ENCODE measurements at regions of chr1 and their contacts with region 1.

Region 1: DNA sequence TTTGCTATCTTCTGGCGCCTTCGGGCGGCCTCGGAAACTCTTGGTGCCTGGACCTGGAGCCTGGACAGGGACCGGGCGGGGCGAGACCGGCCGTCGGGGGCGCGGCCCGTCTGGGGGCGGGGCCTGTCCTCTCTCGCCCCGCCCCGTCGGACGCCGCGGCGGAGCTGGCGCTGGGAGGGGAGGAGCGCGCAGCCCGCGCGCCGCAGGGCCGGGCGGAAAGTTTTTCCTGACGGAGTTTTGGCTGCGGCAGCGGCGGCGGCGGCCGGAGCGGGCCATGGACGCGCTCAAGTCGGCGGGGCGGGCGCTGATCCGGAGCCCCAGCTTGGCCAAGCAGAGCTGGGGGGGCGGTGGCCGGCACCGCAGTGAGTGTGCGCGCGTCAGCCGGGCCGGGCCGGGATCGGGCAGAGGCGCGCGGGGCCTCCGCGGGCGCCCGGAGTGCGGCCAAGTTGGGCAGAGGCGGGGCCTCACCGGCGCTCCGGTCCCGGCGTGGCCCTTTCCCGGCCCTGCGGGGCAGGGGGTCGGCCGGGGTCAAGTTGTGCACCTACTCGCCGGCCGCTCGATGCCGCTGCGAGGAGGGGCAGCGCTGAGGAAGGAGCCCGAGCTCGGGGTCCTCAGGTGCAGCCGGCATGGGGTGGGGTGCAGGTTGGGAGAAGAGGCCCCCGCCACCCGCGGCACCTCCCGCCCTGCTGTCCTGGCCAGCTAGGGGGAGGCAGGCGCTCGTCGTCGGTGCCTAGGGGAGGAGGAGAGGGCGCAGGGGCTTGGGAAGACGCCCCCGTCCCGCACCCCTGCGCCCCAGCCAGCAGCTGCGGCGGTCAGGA is at the start of gene LDLRAP1:
- DNase-seq: peak; percentile 76 to 88 (median 81)
- H3K4me3 ChIP-seq: peak within 1 kb of the TSS; percentile 69
- H3K27ac ChIP-seq: peak within 1 kb of the TSS; percentile 23 to 81
- H3K4me1 ChIP-seq: peaks cover 8% of the 10 kb centered on the region
- H3K27me3 ChIP-seq: no peaks in the 10 kb centered on the region
- CTCF ChIP-seq: no peak
- EP300 ChIP-seq: no peak
- POLR2A ChIP-seq: peak; percentile 80
- total RNA-seq, gene LDLRAP1: 9.3 to 17.4 (median 13.7) TPM

Region 2: DNA sequence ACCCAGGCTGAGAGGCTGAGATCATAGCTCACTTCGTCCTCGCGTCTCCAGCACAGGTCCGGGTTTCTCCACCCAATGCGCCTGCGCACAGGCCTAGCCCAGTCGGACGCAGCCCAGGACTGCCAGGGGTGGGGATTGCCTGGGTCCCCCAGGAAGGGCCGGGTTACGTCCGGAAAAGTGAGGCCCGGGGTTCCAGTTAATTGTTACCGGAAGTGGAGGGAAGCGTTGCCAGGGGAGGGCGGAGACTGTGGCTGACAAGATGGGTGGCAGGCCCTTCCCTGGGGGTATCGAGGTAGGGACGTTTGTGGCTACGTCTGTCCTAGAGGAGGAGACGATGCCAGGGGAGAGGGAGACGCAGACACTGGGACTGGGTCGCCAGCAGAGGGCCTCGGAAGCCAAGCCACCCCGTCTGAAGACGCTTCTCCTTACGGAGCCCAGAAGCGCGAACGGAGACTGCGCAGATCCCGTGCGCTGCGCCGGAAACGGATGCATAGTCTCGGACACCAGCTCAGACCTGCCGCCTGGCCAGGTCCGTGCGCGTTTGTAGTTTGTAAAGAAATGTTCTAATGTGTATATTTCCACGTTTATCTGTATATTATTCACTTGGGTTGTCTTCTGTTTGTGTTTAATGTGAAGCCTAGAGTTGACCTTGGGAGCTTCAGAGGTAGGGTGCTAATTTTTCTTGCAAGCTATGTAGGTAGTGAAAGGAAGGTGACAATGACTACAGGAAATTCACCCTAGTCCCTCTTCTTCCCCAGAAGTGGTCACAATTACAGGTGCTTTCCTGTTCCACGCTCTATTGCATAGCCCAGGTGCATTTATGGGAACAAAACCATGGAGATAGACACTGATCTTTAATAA is 303.7 kb before region 1 on chr1:
- intact Hi-C with region 1: loop called in 1 of 4 experiments (anchors 10 kb)
- DNase-seq: peak; percentile 88 to 92 (median 91)
- H3K4me3 ChIP-seq: peak overlapping the region; percentile 41
- H3K27ac ChIP-seq: peak overlapping the region; percentile 91 to 93
- H3K4me1 ChIP-seq: no peaks in the 10 kb centered on the region
- H3K27me3 ChIP-seq: no peaks in the 10 kb centered on the region
- CTCF ChIP-seq: peak; percentile 49 to 86 (median 79)
- EP300 ChIP-seq: no peak
- POLR2A ChIP-seq: no peak

Region 3: DNA sequence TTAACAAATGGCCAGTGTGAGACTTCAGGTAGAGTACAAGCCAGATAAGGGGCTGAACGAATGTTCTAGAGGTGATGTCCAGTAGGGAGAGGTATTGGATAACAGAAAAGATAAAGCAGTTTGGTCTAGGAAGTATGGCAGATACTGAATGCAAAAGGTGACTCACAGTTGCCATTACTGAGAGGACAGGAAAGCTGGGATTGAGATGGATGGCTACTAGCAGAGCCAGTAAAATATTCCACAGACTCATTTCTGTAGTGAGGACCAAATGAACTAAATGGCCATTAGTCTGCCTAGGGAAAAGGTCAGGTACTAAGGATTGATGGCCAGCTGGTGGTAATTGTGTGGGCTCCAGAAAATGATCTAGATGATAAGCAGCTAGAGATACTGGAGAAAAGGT is 101.5 kb before region 1 on chr1:
- intact Hi-C with region 1: no loop called
- DNase-seq: no peak
- H3K4me3 ChIP-seq: no peak overlapping the region
- H3K27ac ChIP-seq: no peak overlapping the region
- H3K4me1 ChIP-seq: peaks cover 3% of the 10 kb centered on the region
- H3K27me3 ChIP-seq: no peaks in the 10 kb centered on the region
- CTCF ChIP-seq: no peak
- EP300 ChIP-seq: no peak
- POLR2A ChIP-seq: no peak